Ascending aorta (tissue), 2 donors: ENCODE measurements at regions of chr1 and their contacts with region 1.

Region 1: DNA sequence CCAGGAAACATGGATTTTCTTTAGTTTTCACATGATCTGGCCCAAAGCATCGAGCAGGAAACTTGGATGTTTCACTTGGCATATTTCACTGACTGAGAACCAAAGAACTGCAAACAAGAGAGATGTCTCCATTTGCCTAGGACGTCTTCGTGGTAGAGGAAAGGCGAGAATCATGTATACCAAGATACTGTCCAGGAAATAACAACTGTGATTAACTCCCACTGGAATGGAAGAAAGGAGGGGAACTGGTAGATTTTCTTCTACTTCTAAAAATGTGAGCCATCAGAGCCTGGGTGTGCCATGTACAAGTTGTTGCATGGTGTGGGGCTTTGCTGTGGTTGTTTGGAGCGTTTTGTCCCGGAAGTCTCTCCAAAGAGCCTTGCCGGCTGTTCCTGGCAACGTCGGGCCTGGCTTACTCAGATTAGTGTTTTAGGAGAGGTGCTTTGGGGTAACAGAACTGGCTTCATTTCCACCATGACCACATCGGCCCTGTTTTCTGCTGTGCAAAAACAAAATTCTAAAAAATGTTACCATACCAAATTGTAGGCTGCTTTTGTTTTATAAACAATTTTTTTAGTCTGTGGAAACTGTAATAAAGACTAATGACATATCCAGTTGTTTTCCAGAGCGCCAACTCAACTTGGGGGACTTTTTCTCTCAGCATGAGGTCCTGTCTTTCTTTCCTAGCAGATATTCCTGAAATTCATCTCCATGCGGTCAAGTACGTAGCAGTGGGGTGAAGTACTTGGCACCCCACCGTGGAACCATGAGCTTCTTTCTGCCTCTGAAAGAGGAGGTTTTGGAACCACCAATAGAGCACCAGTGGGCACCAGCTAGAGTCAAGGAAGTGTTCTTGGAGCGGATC is 118.3 kb downstream of the TM2D1 start:
- DNase-seq: peak; percentile 76 to 95
- H3K4me3 ChIP-seq: peak overlapping the region in 1 of 2 donors; percentile 51
- H3K27ac ChIP-seq: peak overlapping the region; percentile 91 to 94
- H3K4me1 ChIP-seq: peaks cover 4 to 19% of the 10 kb centered on the region in 2 donors
- H3K27me3 ChIP-seq: no peaks in the 10 kb centered on the region
- CTCF ChIP-seq: no peak

Region 2: DNA sequence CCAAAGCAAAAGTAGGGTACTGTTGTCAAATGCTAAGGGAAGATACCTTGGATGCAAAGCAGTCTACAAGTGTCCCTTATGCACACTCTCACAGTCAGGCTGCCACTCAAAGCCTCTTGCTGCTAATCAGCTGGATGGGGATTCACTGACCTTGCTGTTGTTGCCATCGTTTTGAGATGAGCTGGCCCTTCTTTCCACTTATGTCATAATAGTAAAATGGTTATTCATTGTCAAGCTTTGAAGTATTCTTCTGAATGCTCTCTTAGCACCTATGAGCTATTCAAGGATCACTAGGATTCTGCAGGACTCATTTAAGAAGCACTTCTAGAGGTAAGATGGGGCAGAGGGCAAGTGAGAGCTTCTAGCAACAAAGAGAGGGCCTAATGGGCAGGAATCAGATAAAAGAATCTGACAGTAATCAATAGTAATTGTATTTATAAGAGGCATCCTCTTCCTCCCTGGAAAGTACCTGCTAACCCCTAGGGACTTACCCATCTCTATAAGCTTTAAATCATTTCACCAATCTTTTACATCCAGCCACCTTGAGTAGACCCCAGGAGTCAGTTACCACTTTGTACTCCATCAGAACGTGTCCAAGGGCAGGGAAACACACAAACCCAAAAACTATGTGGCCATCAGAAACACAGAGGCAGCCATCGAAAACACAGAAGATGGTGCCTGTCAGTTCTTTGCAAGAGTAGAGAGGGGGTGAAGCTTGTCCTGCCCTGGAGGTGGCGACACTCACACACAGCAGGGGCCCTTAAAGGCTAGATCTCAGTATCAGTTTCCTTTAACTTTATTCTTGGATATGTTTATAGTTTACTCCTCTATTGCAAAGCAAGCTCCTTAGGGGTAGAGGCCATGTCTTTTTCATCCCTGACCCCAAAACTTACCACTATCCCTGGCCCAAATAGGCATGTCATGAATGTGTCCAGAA is 628.0 kb before region 1 on chr1:
- intact Hi-C with region 1: loop called (anchors 10 kb)
- DNase-seq: no peak
- H3K4me3 ChIP-seq: no peak overlapping the region
- H3K27ac ChIP-seq: peak overlapping the region; percentile 45 to 78
- H3K4me1 ChIP-seq: peaks cover 0 to 27% of the 10 kb centered on the region in 2 donors
- H3K27me3 ChIP-seq: no peaks in the 10 kb centered on the region
- CTCF ChIP-seq: peak; percentile 29 to 53 (median 46)

Region 3: GRCh38 chr1:61184040-61184713 is 422.5 kb before region 1 on chr1:
- intact Hi-C with region 1: loop called (anchors 10 kb)
- DNase-seq: peak; percentile 75 to 96
- H3K4me3 ChIP-seq: peak overlapping the region; percentile 56 to 58
- H3K27ac ChIP-seq: peak overlapping the region; percentile 84 to 92
- H3K4me1 ChIP-seq: peaks cover 9 to 82% of the 10 kb centered on the region in 2 donors
- H3K27me3 ChIP-seq: no peaks in the 10 kb centered on the region
- CTCF ChIP-seq: no peak

Region 4: GRCh38 chr1:61453111-61453961 is 153.3 kb before region 1 on chr1:
- intact Hi-C with region 1: loop called (anchors 5 kb)
- DNase-seq: peak; percentile 76 to 97
- H3K4me3 ChIP-seq: peak overlapping the region in 1 of 2 donors; percentile 31
- H3K27ac ChIP-seq: peak overlapping the region; percentile 83 to 92
- H3K4me1 ChIP-seq: peaks cover 20 to 54% of the 10 kb centered on the region in 2 donors
- H3K27me3 ChIP-seq: no peaks in the 10 kb centered on the region
- CTCF ChIP-seq: peak; percentile 67 to 80 (median 68)

Region 5: GRCh38 chr1:61481313-61481712 is 125.4 kb before region 1 on chr1:
- intact Hi-C with region 1: no loop called
- DNase-seq: no peak
- H3K4me3 ChIP-seq: no peak overlapping the region
- H3K27ac ChIP-seq: no peak overlapping the region
- H3K4me1 ChIP-seq: peaks cover 0 to 5% of the 10 kb centered on the region in 2 donors
- H3K27me3 ChIP-seq: no peaks in the 10 kb centered on the region
- CTCF ChIP-seq: no peak

Region 6: GRCh38 chr1:61641578-61642336 is 35.1 kb after region 1 on chr1:
- intact Hi-C with region 1: loop called (anchors 1 kb)
- DNase-seq: peak; percentile 47 to 92
- H3K4me3 ChIP-seq: peak overlapping the region; percentile 14 to 62
- H3K27ac ChIP-seq: peak overlapping the region; percentile 91 to 94
- H3K4me1 ChIP-seq: peaks cover 29 to 44% of the 10 kb centered on the region in 2 donors
- H3K27me3 ChIP-seq: no peaks in the 10 kb centered on the region
- CTCF ChIP-seq: peak; percentile 73 to 92 (median 77)

Region 7: DNA sequence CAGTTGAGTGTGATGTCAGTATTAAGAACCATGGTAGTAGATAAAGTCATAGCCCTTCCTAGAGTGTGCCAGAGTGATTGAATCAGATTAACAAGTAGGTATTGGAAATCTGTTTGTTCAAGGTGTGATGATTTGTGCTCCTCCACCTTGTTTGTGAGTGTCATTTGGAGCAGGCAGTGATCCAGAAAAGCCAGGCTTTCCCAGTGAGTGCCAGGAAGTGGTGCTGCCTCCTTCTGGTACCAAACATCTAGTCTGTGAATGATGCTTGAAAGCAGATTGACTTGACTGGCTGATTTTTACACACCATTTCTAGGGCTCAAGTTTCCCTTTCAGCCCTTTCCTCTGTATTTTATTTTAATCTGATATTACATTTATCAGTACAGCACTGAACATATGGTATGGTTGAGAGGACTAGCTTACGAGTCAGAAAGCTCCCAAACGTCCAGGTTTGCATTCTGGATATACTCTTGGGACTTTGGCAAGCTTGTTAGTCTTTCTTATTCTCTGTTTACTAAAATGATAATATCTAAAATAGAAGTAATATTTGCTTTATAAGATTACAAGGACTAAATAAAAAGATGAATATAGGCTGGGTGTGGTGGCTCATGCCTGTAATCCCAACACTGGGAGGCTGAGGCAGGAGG is 236.3 kb after region 1 on chr1:
- intact Hi-C with region 1: loop called (anchors 10 kb)
- DNase-seq: no peak
- H3K4me3 ChIP-seq: no peak overlapping the region
- H3K27ac ChIP-seq: peak overlapping the region; percentile 56 to 77
- H3K4me1 ChIP-seq: peaks cover 8 to 46% of the 10 kb centered on the region in 2 donors
- H3K27me3 ChIP-seq: no peaks in the 10 kb centered on the region
- CTCF ChIP-seq: peak in 1 of 3 experiments; percentile 20